ENCODE measurements at regions of chr6 and their contacts with region 1.

Region 1: DNA sequence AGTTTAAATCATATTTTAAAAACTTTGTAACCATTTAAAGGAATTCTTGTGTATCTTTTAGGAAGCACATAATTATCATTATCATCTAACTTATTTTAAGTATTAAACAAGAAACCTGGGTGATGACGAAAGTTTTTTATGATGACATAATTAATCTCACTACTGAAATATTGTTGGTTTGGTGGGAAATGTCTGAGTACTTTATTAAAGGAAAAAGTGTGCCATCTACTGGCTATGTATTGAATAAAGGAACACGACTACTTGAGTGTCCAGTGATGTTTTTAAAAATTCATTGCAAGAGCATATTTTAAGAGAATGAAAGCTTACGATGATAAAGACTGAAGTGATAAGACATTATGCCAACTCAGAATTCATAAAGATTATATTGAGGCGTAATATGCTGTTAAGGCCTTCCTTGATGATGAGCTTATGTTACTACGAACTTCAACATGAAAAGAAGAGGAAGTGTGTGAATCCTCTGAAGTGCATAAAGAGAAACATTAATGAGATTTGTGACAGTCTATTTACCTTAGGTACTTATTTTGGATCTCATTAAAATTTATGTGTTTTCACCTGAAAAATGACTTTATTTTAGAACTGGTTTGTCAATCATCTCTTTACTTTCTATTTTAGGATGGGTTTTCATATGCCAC is 12.0 kb upstream of the TRMT11 start:
- DNase-seq: no peak
- H3K4me3 ChIP-seq: no peak overlapping the region
- H3K27ac ChIP-seq: no peak overlapping the region
- H3K4me1 ChIP-seq: no peaks in the 10 kb centered on the region
- H3K27me3 ChIP-seq: no peaks in the 10 kb centered on the region
- CTCF ChIP-seq: peak; percentile 54 to 56

Region 2: DNA sequence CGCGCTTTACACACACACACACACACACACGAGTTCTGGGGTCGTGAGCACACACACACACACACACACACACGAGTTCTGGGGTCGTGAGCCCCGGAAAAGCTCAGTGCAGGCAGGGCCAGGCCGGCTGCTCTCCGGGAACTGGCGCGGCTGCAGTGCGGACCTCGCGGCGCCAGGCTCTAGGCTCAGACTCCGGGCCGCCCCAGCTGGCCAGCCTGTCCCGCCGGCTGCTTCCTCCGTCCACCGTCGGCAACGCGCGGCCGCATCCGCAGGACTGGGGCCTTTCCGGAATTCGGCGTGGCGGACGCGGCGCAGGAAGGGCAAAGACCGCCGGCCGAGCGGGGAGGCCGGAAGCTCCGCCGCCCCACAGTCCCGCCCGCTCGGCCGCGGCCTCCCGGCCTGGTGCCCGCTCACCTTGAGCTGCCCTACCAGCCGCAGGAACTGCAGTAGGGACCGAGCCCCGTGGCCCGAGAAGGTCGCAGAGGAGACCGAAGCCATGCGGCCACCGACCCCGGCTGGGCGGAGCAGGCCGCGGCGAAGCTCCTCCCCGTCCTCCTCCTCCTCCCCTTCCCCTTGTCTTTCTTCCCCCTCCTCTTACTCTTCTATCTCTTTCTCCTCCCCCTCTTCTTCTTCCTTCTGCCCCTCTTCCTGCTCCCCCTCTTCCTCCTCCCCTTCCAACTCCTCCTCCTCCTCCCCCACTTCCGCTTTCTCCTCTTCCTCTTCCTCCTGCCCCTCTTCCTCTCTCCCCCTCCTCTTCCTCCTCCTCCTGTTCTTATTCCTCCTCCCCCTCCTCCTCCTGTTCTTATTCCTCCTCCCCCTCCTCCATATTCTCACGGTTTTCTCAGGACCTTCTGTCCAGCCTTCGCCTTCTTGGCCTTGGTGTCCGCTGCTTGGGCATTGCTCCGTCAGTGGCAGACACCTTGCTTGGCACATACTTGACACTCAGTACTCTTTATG is 672.6 kb before region 1 on chr6 and contains the start of gene HDDC2:
- intact Hi-C with region 1: loop called (anchors 10 kb)
- DNase-seq: peak; percentile 59 to 83
- H3K4me3 ChIP-seq: peak within 1 kb of the TSS; percentile 76 to 78
- H3K27ac ChIP-seq: peak within 1 kb of the TSS; percentile 88 to 96
- H3K4me1 ChIP-seq: peaks cover 0 to 27% (median 15%) of the 10 kb centered on the region in 4 donors
- H3K27me3 ChIP-seq: no peaks in the 10 kb centered on the region
- CTCF ChIP-seq: no peak

Region 3: DNA sequence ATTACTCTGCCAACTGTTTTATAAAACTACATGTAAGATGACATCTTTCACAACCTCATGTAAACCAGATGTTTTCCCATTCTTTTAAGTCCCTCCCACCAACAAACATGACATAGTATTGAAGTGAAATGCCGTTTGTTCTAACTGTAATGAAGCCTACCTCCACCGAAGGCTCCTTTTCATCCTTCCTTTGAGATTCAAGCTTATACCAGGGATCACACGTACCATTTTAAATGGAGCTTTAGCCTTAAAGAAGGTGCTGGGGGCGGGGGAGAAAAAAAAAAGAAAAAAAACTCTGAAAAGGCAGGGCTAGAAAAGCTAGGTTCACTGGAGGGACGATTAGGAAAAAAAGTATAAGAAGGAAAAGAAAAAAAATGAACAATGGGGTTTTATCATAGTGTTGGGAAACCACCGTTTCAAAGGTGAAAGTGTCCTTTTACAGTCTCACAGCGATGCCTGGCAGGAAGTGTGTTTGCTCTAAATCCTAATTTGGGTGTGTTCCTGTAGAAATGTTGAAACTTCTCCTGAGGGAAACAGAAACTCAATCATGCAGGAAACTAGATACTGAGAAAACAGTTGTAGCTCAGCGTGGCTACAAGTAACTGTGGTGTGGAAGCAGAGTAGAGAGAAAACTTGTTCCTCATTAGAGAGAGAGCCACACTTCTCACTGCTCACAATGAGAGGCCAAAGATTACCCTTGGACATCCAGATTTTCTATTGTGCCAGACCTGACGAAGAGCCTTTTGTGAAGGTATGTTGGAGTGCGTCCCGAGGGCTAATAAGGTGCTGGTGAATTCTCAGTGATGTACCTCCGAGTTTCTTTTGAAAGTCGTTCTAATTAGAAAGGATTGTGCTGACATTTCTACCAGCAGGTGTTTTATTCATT is 55.4 kb before region 1 on chr6:
- intact Hi-C with region 1: loop called (anchors 2 kb)
- DNase-seq: peak in 1 of 2 donors; percentile 46
- H3K4me3 ChIP-seq: peak overlapping the region; percentile 38
- H3K27ac ChIP-seq: peak overlapping the region; percentile 62 to 66
- H3K4me1 ChIP-seq: peaks cover 0 to 7% (median 2%) of the 10 kb centered on the region in 4 donors
- H3K27me3 ChIP-seq: no peaks in the 10 kb centered on the region
- CTCF ChIP-seq: no peak

Measured in tibial artery (tissue), 4 donors.